Gastrocnemius medialis (tissue), 4 donors: ENCODE measurements at regions of chr4 and their contacts with region 1.

Region 1: GRCh38 chr4:6986781-6987587 is 56.2 kb upstream of the TADA2B start:
- DNase-seq: peak; percentile 94 to 95
- ATAC-seq: peak; percentile 81 to 86
- H3K4me3 ChIP-seq: peak overlapping the region; percentile 84 to 97 (median 88)
- H3K27ac ChIP-seq: peak overlapping the region; percentile 93 to 99 (median 98)
- H3K4me1 ChIP-seq: peaks cover 80% of the 10 kb centered on the region in 2 donors
- H3K27me3 ChIP-seq: no peaks in the 10 kb centered on the region
- CTCF ChIP-seq: peak in 1 of 5 experiments; percentile 5
- POLR2A ChIP-seq: peak; percentile 89 to 92

Region 2: GRCh38 chr4:6751611-6752498 is 235.1 kb before region 1 on chr4:
- in situ Hi-C with region 1: no loop called
- intact Hi-C with region 1: no loop called
- DNase-seq: no peak
- ATAC-seq: no peak
- H3K4me3 ChIP-seq: no peak overlapping the region
- H3K27ac ChIP-seq: no peak overlapping the region
- H3K4me1 ChIP-seq: peaks cover 10 to 11% of the 10 kb centered on the region in 2 donors
- H3K27me3 ChIP-seq: no peaks in the 10 kb centered on the region
- CTCF ChIP-seq: no peak
- POLR2A ChIP-seq: no peak

Region 3: DNA sequence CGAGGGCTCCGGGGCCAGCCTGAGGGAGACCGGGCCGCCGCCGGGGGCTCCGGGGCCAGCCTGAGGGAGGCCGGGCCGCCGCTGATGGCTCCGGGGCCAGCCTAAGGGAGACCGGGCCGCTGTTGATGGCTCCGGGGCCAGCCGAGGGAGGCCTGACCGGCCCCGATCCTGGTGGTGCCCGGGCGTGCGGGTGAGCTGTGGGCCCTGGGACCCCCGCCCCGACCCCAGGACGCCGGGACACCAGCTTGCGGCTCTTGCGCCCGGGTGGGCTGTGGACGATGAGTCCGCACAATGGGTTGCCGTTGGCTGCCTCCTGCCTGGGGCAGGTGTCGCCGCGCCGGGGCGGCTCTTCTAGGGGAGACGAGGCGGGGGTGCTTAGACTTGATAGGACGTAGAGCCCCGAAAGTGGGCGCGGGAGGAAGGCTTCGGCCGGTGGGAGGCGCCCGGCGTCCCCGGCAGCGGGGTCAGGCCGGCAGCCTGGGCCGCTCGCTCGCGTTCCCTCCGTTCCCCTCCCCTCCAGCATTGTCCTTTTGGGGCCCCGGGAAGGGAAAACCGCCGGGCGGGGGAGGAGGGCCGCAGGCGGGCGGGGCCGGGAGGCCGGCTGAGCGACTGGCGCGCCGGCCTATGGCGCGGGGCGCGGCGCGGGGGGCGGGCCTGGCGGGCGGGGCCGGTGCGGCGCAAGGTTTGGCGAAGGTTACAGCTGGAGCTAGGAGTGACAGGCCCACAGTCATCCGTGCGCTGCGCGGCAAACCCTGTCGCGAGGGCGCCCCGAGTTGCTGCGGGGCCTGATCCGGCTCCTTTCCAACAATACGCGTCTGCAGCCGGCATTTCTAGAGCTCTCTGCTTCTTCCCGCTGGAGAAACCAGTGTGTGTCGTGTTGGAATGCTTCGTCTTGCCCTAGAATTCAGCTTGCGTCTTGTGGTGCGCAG is 203.7 kb before region 1 on chr4:
- in situ Hi-C with region 1: loop called in 1 of 4 experiments (anchors 10 kb)
- intact Hi-C with region 1: loop called (anchors 2 kb)
- DNase-seq: peak; percentile 88 to 93
- ATAC-seq: peak; percentile 67 to 72
- H3K4me3 ChIP-seq: peak overlapping the region; percentile 74 to 98 (median 82)
- H3K27ac ChIP-seq: peak overlapping the region; percentile 95 to 100 (median 98)
- H3K4me1 ChIP-seq: peaks cover 58 to 59% of the 10 kb centered on the region in 2 donors
- H3K27me3 ChIP-seq: no peaks in the 10 kb centered on the region
- CTCF ChIP-seq: peak in 4 of 5 experiments; percentile 4 to 42 (median 19)
- POLR2A ChIP-seq: peak; percentile 94 to 95

Region 4: GRCh38 chr4:6909073-6909965 is 77.7 kb before region 1 on chr4 and contains the start of gene TBC1D14:
- in situ Hi-C with region 1: loop called in 1 of 4 experiments (anchors 10 kb)
- intact Hi-C with region 1: loop called (anchors 1 kb)
- DNase-seq: peak; percentile 85 to 86
- ATAC-seq: peak; percentile 85 to 88
- H3K4me3 ChIP-seq: peak within 1 kb of the TSS; percentile 73 to 100 (median 79)
- H3K27ac ChIP-seq: peak within 1 kb of the TSS; percentile 93 to 100 (median 98)
- H3K4me1 ChIP-seq: peaks cover 38 to 42% of the 10 kb centered on the region in 2 donors
- H3K27me3 ChIP-seq: no peaks in the 10 kb centered on the region
- CTCF ChIP-seq: peak; percentile 5 to 62 (median 36)
- POLR2A ChIP-seq: peak; percentile 81 to 87
- total RNA-seq, gene TBC1D14: 36.0 to 56.2 (median 41.4) TPM

Region 5: DNA sequence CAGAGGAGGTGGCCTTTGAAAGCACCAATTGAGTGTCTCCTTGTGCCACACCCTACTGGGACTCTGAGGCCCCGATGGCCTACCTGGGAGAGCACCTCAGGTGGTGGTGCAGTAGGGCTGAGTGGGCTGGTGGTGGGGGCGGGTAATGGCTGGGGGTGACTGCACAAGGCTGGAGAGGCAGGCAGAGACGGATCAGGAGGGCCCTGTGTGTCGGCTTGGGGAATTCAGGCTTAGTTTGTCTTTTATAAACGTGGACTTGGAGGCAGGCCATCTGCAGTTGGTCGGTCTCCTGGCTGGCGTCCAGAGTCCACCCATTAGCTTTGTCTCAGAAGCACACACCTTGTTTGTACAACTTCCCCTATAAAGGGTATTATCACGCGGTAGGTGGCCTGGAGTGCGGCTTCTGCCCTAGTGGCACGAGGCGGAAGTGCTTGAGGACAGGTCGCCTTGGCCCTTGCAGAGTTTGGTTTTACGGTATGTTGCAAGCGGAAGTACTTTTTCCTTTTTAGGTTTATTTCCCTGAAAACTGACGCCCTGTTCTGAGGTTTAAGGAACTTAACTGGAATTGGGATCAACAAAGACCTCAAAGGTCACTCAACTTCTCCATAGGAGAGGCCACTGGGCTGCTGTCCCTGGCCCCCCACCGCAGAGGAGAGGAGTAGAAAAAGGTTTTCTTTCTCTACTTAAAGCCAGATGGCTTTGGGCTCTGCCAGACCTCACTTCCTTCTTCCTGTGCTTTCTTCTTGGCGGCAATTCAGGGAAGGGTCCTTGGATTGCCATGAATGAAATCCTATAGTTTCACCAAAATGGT is 69.3 kb before region 1 on chr4:
- in situ Hi-C with region 1: loop called in 1 of 4 experiments (anchors 10 kb)
- intact Hi-C with region 1: no loop called
- DNase-seq: peak; percentile 50 to 61
- ATAC-seq: peak in 1 of 2 donors; percentile 29
- H3K4me3 ChIP-seq: no peak overlapping the region
- H3K27ac ChIP-seq: peak overlapping the region; percentile 57 to 80 (median 73)
- H3K4me1 ChIP-seq: peaks cover 25 to 40% of the 10 kb centered on the region in 2 donors
- H3K27me3 ChIP-seq: no peaks in the 10 kb centered on the region
- CTCF ChIP-seq: peak in 4 of 5 experiments; percentile 10 to 46 (median 34)
- POLR2A ChIP-seq: no peak

Region 6: GRCh38 chr4:6974138-6974848 is 12.7 kb before region 1 on chr4:
- in situ Hi-C with region 1: no loop called
- intact Hi-C with region 1: loop called (anchors 2 kb)
- DNase-seq: peak; percentile 56 to 76
- ATAC-seq: peak; percentile 77 to 87
- H3K4me3 ChIP-seq: no peak overlapping the region
- H3K27ac ChIP-seq: peak overlapping the region; percentile 4 to 88 (median 80)
- H3K4me1 ChIP-seq: peaks cover 36 to 37% of the 10 kb centered on the region in 2 donors
- H3K27me3 ChIP-seq: no peaks in the 10 kb centered on the region
- CTCF ChIP-seq: peak; percentile 95 to 98 (median 96)
- POLR2A ChIP-seq: no peak

Region 7: DNA sequence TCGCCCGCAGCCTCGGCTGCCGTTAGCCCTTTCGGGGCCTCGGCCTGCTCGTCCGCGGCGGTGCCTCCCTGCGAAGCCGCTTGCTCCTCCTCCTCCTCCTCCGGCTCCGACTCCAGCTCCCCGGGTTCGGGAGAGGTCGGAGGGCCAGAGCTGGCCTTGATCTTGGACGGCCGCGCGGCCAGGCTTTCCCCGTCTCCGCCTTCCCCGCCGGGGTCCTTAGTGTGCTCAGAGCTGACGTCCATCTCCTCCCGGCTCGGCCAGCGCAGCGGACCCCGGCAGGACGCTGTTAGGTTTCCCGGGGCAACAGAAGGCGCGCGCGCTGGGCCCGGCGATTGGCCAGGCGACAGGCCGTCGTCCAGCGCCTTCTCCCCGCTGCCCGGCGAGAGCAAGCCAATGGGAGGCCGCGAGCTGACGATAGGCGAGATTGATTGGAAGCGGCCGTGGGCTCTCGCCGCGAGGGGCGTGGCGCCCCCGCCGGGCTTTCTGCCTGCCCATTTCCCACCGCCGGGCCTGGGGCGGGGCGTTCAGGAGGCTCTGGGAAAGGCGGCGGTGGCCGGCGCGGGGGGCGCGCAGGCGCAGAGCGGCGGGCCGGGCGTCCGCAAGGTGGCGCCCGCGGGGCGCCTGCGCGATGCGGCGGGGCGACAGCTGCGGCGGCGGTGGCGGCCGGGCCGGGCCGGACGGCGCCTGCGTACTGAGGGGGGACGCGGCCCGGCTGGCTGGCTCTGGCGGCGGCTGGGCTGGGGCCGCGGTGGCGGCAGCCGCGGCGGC is 55.9 kb after region 1 on chr4 and contains the start of gene TADA2B:
- in situ Hi-C with region 1: no loop called
- intact Hi-C with region 1: loop called (anchors 1 kb)
- DNase-seq: peak; percentile 95 to 97
- ATAC-seq: peak; percentile 74 to 78
- H3K4me3 ChIP-seq: peak within 1 kb of the TSS; percentile 85 to 100 (median 98)
- H3K27ac ChIP-seq: peak within 1 kb of the TSS; percentile 94 to 98 (median 98)
- H3K4me1 ChIP-seq: peaks cover 48 to 51% of the 10 kb centered on the region in 2 donors
- H3K27me3 ChIP-seq: no peaks in the 10 kb centered on the region
- CTCF ChIP-seq: peak; percentile 35 to 76 (median 76)
- POLR2A ChIP-seq: peak in 1 of 2 donors; percentile 25
- total RNA-seq, gene TADA2B: 55.4 to 70.2 (median 56.4) TPM

Region 8: DNA sequence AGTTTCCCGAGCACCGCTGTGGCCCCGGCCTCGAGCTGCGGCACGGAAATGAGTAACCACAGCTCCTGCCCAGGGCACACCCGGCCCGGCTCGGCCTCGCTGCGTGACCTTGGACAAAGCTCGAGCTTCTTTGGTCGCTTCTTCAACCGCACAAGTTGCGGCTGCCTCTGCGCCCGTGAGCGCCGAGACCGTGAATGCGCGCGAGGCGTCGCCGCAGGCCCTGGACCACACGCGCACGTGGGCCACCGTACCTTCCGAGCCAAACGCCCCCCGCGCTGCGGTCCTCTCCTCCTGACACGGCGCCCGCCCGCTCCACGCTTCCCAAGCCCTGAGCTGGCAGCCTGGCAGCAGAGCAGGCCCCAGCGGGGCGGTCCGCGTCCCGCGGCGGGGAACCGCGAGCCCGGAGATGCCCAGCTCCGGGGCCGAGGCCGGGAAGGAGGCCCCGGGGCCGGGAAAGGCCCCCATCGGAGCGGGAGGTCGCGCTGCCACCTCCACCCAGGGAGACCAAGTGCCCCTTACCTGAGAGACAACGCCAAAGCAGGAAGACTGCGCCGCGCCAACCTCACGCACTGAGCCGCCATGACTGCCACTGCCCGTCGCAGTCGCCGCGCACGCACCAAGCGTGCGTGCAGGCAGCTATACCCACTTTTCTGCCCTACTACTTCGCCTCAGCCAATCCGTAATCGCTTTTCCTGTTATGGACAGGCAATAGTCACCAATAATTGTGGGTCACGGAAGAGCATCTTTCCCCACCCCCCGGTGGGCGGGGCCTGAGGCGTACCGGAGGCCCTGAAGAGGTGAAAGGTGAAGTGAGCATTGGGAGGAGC is 80.7 kb after region 1 on chr4 and contains the start of gene GRPEL1:
- in situ Hi-C with region 1: loop called in 1 of 4 experiments (anchors 10 kb)
- intact Hi-C with region 1: loop called (anchors 1 kb)
- DNase-seq: peak; percentile 98 to 100
- ATAC-seq: peak; percentile 95 to 98
- H3K4me3 ChIP-seq: peak within 1 kb of the TSS; percentile 81 to 99 (median 86)
- H3K27ac ChIP-seq: peak within 1 kb of the TSS; percentile 89 to 98 (median 96)
- H3K4me1 ChIP-seq: peaks cover 31 to 33% of the 10 kb centered on the region in 2 donors
- H3K27me3 ChIP-seq: no peaks in the 10 kb centered on the region
- CTCF ChIP-seq: peak in 1 of 5 experiments; percentile 23
- POLR2A ChIP-seq: peak; percentile 99
- total RNA-seq, gene GRPEL1: 28.8 to 58.0 (median 35.8) TPM